Right cardiac atrium (tissue), 5 donors: ENCODE measurements at regions of chr4 and their contacts with region 1.

Region 1: DNA sequence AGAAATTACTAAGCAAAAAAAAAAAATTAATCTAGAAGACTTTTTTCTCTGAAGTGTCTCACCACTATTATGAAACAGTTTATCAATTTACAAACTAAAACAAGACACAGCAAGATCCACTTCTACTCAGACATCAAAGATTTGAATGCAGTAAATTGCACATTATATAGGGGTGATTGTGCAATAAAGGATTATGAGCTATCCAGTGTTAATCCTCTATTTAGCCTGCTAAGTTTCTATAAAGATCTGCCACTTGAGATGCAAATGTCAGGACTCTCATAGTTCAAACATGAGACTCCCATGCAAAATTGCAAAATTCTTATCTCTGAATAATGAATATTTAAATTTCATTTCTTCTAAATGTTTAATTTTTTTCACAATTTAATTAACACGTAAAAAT is 2.2 kb downstream of the TECRL start:
- DNase-seq: no peak
- ATAC-seq: no peak
- H3K4me3 ChIP-seq: peak overlapping the region; percentile 71
- H3K27ac ChIP-seq: no peak overlapping the region
- H3K4me1 ChIP-seq: no peaks in the 10 kb centered on the region
- H3K27me3 ChIP-seq: no peaks in the 10 kb centered on the region

Region 2: DNA sequence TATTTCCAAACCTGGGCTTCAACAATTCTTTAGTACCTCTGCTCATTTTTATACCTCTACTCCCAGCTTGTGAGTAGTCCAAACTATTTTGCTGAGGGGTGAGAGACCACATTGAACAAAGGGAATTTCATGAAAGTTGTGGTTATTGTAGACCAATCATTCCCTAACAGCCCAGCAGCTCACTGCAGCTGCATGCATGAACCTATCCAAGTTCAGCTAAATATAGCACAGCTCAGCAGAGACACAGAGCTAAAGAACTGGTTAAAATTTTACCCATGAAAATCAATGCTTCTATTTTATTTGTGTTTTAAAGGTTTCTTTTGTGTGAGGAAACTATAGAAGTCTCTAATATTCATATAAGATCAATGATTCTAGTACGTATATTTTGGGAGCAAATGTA is 80.5 kb before region 1 on chr4:
- intact Hi-C with region 1: no loop called
- DNase-seq: no peak
- ATAC-seq: peak; percentile 44 to 74
- H3K4me3 ChIP-seq: no peak overlapping the region
- H3K27ac ChIP-seq: no peak overlapping the region
- H3K4me1 ChIP-seq: no peaks in the 10 kb centered on the region
- H3K27me3 ChIP-seq: no peaks in the 10 kb centered on the region

Region 3: GRCh38 chr4:64341711-64342110 is 65.3 kb before region 1 on chr4:
- intact Hi-C with region 1: loop called in 1 of 4 experiments (anchors 5 kb)
- DNase-seq: peak; percentile 66 to 87 (median 86)
- ATAC-seq: peak; percentile 96 to 97
- H3K4me3 ChIP-seq: no peak overlapping the region
- H3K27ac ChIP-seq: no peak overlapping the region
- H3K4me1 ChIP-seq: no peaks in the 10 kb centered on the region
- H3K27me3 ChIP-seq: no peaks in the 10 kb centered on the region